ENCODE measurements at regions of chr3 and their contacts with region 1.

Region 1: DNA sequence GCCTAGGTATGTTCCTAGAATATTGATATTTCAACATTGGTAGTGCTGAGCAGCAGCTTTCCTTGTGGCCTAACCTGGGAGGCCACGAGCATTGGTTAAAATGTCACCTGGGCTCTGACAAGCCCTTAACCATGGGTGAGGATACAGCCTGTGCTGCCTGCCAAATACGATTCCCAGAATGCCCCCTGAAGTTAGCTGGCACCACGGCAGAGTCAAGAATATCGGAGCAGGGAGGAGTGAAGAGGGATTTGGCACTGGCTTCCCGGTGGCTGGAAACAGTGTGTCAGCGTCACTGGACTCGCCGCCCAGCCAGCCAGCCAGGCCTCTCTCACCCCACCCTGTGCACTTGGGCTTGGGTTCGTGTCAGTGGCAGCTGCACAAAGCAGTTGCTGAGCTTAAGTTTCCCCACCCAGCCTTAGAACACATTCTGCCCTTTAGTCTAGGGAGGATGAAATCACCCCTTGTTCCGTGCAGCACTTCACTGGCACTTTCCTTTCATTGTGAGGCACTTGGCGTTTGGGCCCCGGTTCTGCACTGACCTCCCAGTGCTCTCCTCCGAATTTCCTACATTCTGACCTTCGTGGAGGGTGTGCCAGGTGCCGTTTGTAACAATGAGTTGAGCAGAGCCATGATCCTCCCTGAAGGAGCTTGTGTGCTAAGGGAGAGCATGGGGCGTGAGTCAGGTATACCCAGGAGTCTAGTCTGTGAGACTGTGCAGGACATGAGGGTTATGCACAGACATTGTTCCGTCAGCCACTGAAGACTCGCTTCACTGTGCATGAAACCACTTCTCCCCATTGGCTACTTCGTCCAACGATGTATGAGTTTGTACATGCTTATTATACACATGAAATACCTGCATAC is 152.8 kb upstream of the BHLHE40 start:
- DNase-seq: peak; percentile 88
- ATAC-seq: peak; percentile 90

Region 2: GRCh38 chr3:4078903-4079302 is 747.6 kb before region 1 on chr3:
- intact Hi-C with region 1: no loop called
- DNase-seq: no peak
- ATAC-seq: no peak

Region 3: DNA sequence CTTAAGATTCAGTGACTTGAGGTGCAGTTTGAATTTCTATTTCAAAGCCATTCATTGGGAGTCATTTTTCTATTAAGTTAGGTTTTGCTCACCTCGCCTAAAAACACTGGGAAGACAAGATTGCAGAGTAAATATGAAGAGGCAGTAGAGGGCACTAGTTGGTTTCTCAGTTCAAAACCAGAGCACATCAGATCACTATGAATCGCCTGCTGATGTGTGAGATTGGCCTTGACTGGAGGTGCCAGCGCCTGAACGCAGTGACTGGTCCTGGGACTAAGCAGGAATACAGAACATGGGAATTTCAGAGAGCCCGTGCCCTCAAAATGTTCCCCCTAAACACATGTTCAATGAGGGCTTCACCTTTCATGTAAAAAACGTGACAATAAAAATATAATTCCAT is 104.4 kb before region 1 on chr3:
- intact Hi-C with region 1: loop called (anchors 10 kb)
- DNase-seq: peak; percentile 59
- ATAC-seq: peak; percentile 76

Region 4: GRCh38 chr3:4866841-4867240 is 40.4 kb after region 1 on chr3:
- intact Hi-C with region 1: no loop called
- DNase-seq: no peak
- ATAC-seq: no peak

Region 5: GRCh38 chr3:5226783-5227182 is 400.3 kb after region 1 on chr3:
- intact Hi-C with region 1: no loop called
- DNase-seq: no peak
- ATAC-seq: no peak

Measured in left ventricle myocardium superior (tissue), 1 donor.